ENCODE measurements at regions of chr1 and their contacts with region 1.

Region 1: DNA sequence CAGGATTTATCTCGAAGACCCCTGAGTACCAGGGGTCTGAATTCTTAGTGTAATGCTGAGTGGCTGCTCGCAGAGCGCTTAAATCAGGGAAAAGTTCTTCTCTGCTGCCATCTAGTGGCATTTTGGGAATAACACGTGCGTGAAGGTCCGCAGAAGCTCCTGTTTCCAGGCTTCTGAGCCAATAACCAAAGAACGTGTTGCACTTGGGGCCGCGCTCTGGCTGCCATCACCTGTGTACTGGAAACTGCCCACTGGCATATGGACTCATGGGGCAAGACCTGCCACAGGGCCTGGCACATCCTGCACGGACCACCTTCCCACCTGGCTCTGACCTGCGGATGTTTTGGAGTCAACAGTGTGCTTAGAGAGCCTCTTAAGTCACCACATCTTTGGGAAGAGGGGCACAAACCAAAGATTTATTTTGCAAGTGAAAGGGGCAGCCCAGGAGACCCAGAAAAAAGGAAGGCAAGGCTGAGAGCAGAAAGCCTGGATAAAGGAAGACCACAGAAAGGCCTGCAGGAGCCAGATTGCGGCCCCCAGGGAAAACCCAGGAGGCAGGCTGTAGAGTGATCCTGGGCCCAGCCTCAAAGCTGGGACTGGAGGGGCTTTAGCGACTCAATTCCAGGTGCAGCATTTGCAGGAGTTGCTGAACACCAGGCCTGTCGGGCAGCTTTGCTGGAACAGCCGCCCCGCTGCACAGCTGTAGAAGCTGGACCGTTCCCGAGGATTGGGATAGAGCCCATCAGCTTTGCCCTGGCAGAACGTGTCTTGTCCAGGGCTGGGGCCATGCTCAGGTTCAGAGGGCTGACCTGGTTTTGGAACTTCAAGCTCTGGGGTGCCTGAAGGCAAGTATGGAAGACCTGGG is 13.0 kb downstream of the CHIT1 start:
- DNase-seq: peak in 8 of 10 donors; percentile 33 to 90 (median 72)

Region 2: DNA sequence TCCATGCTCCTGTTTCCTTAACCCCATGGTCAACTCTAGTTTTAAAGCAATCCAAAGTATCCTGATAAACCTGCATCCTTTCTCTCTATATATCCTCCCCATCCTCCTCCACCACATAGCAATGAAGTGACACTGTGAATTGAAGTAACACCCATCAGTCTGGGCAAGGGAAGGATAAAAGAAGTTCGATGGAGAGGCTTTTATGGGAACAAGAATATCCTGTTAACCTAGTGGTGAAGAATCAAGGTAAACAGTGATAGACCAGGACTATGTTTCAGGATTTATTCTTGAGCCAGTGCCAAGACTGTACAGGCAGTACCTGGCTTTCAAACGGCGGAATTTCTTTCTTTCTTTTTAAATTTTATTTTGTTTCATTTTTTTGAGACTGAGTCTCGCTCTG is 345.1 kb before region 1 on chr1:
- intact Hi-C with region 1: no loop called
- DNase-seq: no peak

Region 3: GRCh38 chr1:203038891-203039608 is 177.5 kb before region 1 on chr1:
- intact Hi-C with region 1: loop called (anchors 1 kb)
- DNase-seq: peak; percentile 62 to 96 (median 82)

Region 4: DNA sequence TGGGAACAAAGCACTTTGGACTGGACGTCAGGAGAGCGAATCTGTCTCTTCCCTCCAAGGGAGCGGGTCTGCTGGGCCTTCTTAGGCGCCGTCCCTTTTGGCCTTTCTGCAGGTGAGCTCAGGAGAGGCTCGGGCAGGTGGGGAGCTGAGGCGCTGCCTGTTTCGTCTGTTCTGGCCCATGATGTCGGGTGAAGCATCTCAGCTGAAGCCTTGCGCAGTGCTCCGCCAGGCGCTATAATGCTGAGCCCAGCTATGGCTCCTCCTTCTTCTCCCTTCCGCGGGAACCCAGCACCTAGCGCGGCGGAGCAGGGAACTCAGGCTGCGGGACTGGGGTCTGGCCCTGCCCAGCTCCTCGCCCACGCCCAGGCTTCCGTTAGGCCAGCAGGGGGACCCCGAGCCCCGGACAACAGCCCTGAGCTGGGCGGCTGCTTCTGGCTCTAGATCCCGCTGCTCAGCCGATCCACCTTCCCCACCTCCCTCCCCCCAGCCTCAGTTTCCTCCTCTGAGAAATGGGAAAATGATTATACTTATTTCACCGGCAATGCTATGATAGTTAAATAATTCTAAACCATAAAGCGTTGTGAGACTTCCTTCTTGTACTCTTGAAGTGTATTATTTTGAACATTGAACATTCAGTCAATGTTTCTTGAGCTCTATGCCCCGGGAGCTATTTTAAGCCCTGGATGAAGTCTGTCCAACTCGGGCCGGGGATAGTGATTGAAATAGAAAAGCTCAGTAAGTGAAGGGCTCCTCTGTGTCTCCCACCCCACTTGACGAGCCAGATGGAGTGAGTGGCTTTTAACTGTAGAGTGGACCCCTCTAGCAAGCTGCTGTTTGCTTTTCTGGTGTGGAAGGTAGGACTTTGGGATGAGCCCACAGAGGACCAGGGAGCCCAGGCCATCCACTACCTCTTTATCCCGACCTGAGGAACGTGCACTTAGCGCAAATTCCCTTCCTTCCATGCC is 98.6 kb before region 1 on chr1:
- intact Hi-C with region 1: loop called (anchors 1 kb)
- DNase-seq: peak; percentile 66 to 97 (median 81)

Region 5: GRCh38 chr1:203172128-203173010 is 44.1 kb before region 1 on chr1:
- intact Hi-C with region 1: loop called (anchors 5 kb)
- DNase-seq: peak in 9 of 10 donors; percentile 52 to 96 (median 77)

Region 6: DNA sequence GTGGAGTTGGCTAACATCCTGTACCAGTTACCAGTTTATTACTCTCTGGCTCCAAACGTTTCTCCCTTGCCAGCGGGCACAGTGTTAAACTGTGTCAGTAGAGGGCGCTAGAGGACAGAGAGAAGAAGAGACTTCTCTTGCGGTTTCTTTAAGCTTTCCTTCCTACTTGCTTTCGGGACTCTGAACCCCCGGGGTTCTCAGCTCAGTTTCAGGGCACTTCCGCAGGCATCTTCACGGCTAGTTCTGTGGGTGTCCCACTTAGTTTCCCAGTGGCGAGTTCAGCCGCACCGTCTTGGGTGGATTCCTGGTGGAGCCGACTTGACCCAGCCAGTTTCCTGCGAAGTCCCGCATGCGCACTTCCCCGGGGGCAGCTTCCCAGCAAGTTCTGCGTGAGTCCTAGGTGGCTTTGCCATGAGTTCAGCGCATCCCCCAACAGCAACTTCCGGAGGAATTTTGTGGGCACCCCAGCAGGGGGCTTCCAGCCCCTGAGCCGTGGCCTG is 50.9 kb after region 1 on chr1:
- intact Hi-C with region 1: no loop called
- DNase-seq: peak in 9 of 10 donors; percentile 60 to 94 (median 81)

Measured in posterior cingulate gyrus (tissue), 11 donors.